Caco-2 (cell line): ENCODE measurements at regions of chr9 and their contacts with region 1.

Region 1: DNA sequence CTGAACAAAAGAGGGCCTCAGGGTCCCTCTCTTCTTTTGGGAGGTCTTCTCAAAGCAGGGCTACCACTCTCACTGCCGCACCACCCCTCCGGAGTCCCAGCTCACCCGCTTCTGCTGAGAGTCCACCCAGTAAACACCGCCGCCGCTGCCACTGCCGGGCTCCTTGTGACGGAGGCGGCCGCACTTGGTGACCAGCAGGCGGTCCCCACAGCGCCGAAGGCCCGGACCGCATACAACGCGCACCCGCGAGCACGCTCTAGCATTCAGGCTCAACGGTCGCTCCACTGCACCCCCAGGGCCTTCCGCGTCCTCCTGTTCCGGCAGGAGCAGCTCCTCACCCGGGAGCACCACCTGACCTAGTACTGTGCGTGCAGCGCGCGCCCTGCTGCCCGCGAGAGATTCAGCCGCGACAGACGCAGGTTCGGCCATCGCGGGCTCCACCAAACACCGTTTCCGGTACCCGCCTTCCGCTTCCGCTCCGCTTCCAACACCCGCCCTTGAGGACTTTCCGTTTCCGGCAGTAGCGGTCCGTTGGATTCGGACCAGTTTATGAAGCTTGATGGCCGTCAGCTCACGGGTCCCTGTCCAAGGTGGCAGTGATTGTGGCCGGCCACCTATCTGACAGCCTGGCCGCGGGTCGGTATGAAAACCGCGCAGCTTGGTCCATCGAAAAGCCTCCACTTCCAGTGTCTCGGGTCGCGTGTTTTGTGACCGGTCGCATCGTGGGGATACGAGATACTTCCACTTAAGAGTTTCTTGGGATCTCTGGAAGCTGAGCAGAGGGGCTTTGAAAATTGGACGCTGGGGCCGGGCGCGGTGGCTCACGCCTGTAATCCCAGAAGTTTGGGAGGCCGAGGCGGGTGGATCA is at the start of gene EXOSC3:
- DNase-seq: peak; percentile 91 to 92
- H3K4me3 ChIP-seq: peak within 1 kb of the TSS; percentile 97
- H3K4me3 Mint-ChIP-seq: peak within 1 kb of the TSS; percentile 97
- H3K27ac Mint-ChIP-seq: peak within 1 kb of the TSS; percentile 98
- H3K4me1 ChIP-seq: 0 out of 2 replicates have a peak, but pooled peaks cover 3% of the 10 kb centered on the region
- H3K4me1 Mint-ChIP-seq: peaks cover 9% of the 10 kb centered on the region
- H3K27me3 ChIP-seq: no peaks in the 10 kb centered on the region
- H3K27me3 Mint-ChIP-seq: no peaks in the 10 kb centered on the region
- CTCF ChIP-seq: peak; percentile 25 to 28
- total RNA-seq, gene EXOSC3: 60.3 and 70.6 TPM in 2 replicates

Region 2: DNA sequence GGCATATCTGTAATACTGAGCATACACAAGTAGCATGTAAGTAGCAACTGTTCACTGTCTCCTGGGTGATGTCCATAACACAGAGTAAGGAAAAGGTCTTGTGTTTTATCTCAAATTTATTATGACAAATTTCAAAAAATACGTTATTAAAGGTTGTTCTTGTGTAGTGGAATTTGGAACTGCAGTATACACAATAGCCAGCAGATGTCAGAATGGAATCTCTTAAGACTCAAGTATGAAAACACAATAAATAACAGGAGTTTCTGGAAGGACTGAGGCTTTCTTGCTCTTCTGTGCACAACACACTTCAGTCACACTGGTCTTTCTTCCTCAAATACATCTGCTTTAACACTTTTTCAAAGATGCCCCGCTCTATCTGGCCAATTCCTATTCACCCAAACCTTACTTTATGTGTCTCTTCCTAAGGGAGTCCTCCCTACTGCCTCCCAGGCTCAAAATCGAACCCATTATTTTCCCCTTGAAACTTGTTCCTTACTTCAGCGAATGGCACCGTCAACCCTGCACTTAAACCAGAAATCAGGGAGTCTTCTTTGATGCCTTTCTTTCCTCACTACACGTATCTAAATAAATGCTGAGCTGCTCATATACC is 202.2 kb before region 1 on chr9:
- CTCF ChIA-PET with region 1: no interaction called
- POLR2A ChIA-PET with region 1: no interaction called
- intact Hi-C with region 1: loop called (anchors 10 kb)
- DNase-seq: peak in 1 of 2 experiments; percentile 20
- H3K4me3 ChIP-seq: no peak overlapping the region
- H3K4me3 Mint-ChIP-seq: no peak overlapping the region
- H3K27ac Mint-ChIP-seq: no peak overlapping the region
- H3K4me1 ChIP-seq: no peaks in the 10 kb centered on the region
- H3K4me1 Mint-ChIP-seq: peaks cover 10% of the 10 kb centered on the region
- H3K27me3 ChIP-seq: no peaks in the 10 kb centered on the region
- H3K27me3 Mint-ChIP-seq: no peaks in the 10 kb centered on the region
- CTCF ChIP-seq: peak; percentile 41 to 66

Region 3: GRCh38 chr9:37753489-37754190 is 31.2 kb before region 1 on chr9 and contains the start of gene TRMT10B:
- CTCF ChIA-PET with region 1: no interaction called
- POLR2A ChIA-PET with region 1: interaction called, 3 read pairs
- intact Hi-C with region 1: loop called (anchors 2 kb)
- DNase-seq: peak; percentile 68 to 80
- H3K4me3 ChIP-seq: peak within 1 kb of the TSS; percentile 95
- H3K4me3 Mint-ChIP-seq: peak within 1 kb of the TSS; percentile 75
- H3K27ac Mint-ChIP-seq: peak within 1 kb of the TSS; percentile 39
- H3K4me1 ChIP-seq: no peaks in the 10 kb centered on the region
- H3K4me1 Mint-ChIP-seq: peaks cover 5% of the 10 kb centered on the region
- H3K27me3 ChIP-seq: no peaks in the 10 kb centered on the region
- H3K27me3 Mint-ChIP-seq: no peaks in the 10 kb centered on the region
- CTCF ChIP-seq: peak in 1 of 2 experiments; percentile 9
- total RNA-seq, gene TRMT10B: 7.8 and 10.0 TPM in 2 replicates

Region 4: GRCh38 chr9:37800631-37801286 is 15.9 kb after region 1 on chr9 and contains the start of gene DCAF10:
- CTCF ChIA-PET with region 1: interaction called, 6 read pairs
- POLR2A ChIA-PET with region 1: interaction called, 12 read pairs
- intact Hi-C with region 1: loop called (anchors 1 kb)
- DNase-seq: peak; percentile 90 to 96
- H3K4me3 ChIP-seq: peak within 1 kb of the TSS; percentile 100
- H3K4me3 Mint-ChIP-seq: peak within 1 kb of the TSS; percentile 91
- H3K27ac Mint-ChIP-seq: peak within 1 kb of the TSS; percentile 81
- H3K4me1 ChIP-seq: no peaks in the 10 kb centered on the region; the same call in 1 of the 2 replicates
- H3K4me1 Mint-ChIP-seq: peaks cover 18% of the 10 kb centered on the region
- H3K27me3 ChIP-seq: no peaks in the 10 kb centered on the region
- H3K27me3 Mint-ChIP-seq: no peaks in the 10 kb centered on the region
- CTCF ChIP-seq: no peak
- total RNA-seq, gene DCAF10: 11.4 and 13.5 TPM in 2 replicates